RWPE1 (cell line): ENCODE measurements at regions of chrX and their contacts with region 1.

Region 1: DNA sequence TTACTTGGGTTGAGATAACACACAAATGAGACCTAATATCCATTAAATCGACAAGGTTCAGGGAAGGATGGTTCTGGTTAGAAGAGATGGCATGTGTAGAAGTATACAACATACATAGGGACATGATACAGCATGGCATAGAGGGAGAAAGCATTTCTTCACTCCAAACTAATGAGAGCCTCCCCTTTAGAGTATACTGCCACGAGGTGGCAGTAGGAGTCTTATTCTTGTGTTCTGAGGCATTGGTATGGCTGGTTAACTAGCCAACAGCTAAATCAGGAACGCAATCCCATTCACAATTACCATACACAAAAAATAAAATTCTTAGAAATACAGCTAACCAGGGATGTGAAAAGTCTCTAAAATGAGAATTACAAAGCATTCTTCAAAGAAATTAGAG is 29.1 kb upstream of the TRO start:
- DNase-seq: peak; percentile 0
- H3K27ac ChIP-seq: no peak overlapping the region
- CTCF ChIP-seq: 0 out of 2 replicates have a peak, but pooled peaks have one; percentile 9

Region 2: DNA sequence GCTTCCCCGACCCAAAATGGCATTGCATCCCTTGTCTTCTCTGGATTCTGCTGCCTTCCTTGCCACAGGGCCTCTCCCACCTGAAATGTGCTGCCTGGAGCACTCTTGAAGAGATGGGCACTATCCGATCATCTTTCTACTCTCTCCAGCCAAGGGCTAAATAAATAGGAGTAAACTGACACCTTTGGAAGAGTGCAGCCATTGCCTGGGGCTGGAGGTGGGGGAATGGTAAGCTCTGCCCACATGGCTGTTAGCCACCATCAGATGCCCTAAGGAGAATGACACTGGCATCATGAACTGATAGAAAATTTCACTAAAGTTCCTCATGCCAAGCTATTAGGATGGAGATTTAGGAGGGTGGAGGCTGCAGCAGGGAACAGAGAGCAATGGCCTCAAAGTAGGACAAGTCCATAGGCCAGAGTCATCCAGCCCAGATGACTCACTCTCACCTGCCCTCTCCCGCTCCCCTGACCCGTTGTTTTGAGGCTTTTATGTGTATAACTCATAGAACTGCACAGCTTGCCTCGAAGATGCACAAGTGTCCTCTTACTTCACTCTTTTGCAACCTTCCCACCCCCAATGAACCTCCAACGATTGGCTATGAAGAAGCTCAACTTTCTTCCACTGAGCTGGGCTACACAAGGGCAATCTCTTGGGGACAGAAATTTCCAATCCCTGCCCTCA is 103.2 kb after region 1 on chrX:
- CTCF ChIA-PET with region 1: no interaction called
- POLR2A ChIA-PET with region 1: no interaction called
- DNase-seq: no peak
- H3K27ac ChIP-seq: no peak overlapping the region
- CTCF ChIP-seq: no peak

Region 3: GRCh38 chrX:55008471-55009358 is 117.1 kb after region 1 on chrX:
- CTCF ChIA-PET with region 1: interaction called, 11 read pairs
- POLR2A ChIA-PET with region 1: no interaction called
- DNase-seq: peak; percentile 72
- H3K27ac ChIP-seq: peak overlapping the region; percentile 84
- CTCF ChIP-seq: no peak